Cardiac septum (tissue), 1 donor: ENCODE measurements at regions of chr16 and their contacts with region 1.

Region 1: GRCh38 chr16:66608241-66609138 is 4.0 kb downstream of the CMTM3 start:
- DNase-seq: peak; percentile 92

Region 2: DNA sequence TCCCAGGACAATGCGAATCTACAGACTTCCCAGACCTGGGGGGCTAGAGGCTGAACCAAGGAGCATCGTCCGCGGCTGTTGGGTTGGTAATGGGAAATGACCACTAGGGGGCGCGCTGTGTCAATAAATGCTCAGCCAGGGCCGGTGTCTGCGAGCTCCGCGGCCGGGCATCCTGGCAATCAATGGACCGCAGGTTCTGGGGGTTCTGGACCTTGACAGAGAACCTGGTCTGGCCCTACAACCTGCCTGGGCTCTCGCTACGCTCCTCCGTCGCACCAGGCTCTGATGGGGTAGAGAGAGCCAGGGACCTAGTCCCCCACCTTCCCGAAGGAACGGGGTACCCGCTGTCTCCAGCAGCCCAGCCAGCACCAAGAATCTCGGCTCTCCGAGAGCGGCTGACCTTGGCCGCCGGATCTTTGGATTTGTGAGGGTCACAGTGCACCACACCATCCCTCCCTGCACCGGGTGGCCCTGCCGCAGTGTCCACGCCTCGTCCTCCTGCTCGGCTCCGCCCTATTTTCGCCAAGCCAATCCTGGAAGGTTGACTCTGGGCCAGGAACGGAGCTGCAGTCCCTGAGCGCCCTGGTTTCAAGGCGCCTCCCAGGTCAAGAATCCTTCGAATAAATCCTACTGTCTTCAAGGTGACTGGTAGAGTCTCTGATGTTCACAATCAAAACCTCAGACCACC is 201.8 kb before region 1 on chr16:
- intact Hi-C with region 1: loop called (anchors 2 kb)
- DNase-seq: peak; percentile 95

Region 3: DNA sequence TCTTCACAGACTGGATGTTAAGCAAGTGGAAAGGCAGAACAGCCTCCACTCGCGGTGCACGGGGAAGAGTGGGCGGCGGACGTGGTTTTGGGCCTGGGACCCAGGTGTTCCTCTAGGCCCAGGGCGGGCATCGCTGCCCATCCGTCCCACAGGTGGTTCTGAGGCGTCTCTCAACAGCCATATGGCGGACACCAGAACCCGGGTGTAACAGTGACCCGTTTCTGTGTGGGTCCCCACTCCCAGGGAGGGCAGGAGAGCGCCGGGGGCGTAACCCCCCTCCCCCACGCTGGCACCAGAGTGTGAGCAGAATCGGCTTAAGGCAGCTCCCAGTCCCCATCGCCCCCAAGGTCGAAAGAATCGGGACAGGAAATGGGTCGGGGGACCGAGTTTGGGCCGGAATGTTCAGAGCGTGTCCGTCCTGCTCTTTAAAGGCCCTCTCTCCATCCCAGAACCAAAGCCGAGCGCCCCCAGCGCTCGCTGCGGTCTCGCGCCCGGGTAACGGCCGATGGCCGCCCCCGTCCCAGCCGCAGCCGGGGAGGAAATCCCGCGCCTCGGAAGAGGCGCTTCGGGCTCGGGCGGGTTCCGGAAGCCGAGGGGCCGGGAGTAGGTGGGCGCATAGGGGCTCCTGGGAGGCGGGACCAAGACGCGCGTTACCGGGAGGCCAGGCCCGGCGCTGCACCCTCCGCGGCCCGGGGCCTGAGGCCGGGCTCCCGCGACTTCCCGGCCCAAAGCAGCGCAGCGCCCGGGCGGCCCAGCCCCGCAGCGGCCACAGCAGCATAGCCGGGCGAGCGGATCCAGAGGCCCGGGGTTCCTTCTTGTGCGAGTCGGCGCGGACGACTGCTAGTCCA is 59.0 kb before region 1 on chr16 and contains the start of gene TK2:
- intact Hi-C with region 1: loop called (anchors 1 kb)
- DNase-seq: peak; percentile 88
- total RNA-seq, gene TK2: 23.4 TPM

Region 4: GRCh38 chr16:66696669-66697630 is 88.5 kb after region 1 on chr16 and contains the start of gene CMTM4:
- intact Hi-C with region 1: loop called (anchors 5 kb)
- DNase-seq: peak; percentile 93
- total RNA-seq, gene CMTM4: 10.4 TPM

Region 5: DNA sequence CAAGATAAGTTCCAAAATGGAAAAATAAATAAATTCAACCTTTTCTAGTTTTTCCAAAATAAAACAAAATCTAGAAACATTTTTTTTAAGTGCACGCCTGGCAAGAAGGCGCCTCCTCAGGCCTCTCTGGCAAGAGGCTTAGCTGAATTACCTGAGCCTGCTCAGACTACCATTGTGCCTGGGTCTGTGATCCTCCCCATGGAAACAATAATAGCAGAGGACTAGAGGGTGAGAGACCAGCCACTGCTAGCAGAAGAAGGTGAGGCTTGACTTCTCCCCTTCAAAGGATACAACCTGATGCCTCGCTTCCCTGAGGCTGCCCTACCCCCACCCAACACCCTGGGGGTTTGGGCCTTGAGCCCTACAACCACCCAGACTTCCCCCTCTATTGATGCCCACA is 178.1 kb after region 1 on chr16:
- intact Hi-C with region 1: no loop called
- DNase-seq: no peak

Region 6: GRCh38 chr16:66824006-66824405 is 215.5 kb after region 1 on chr16:
- intact Hi-C with region 1: no loop called
- DNase-seq: no peak

Region 7: GRCh38 chr16:66872559-66872942 is 264.1 kb after region 1 on chr16:
- intact Hi-C with region 1: loop called (anchors 2 kb)
- DNase-seq: no peak